ENCODE measurements at regions of chr22 and their contacts with region 1.

Region 1: DNA sequence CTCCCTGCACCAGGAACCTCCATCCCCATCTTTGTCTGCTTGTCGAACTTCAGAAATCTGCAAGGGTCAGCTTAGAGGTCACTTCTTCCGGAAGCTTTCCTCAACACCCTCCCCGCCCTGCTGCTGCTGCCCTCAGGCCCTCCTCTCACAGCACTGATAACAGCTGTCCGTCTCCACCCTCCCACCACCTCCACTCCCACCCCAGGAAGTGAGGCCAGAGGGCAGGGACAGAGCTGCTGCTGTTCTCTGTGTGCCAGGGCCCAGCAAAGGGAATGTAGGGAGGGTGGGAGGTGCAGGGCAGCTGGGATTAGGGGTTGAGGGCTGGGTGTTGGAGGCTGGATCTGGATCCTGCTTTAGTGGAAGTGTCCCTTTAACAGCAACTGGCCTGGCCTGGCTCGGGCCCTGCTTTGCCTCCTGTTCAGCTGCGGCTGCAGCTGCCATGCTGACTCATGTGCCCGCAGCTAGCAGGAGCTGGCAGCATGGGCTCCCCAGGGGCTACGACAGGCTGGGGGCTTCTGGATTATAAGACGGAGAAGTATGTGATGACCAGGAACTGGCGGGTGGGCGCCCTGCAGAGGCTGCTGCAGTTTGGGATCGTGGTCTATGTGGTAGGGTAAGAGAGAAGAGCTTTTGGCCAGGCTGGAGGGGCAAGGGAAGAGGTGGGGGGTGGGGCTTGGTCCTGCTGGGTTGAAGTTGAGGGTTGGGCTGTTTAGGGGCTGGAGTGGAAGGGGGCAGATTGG is at the start of gene P2RX6:
- DNase-seq: no peak
- H3K4me3 ChIP-seq: peak within 1 kb of the TSS in 1 of 3 donors; percentile 8
- H3K27ac ChIP-seq: peak within 1 kb of the TSS in 1 of 3 donors; percentile 3
- H3K4me1 ChIP-seq: peaks cover 8 to 17% of the 10 kb centered on the region in 2 donors
- H3K27me3 ChIP-seq: no peaks in the 10 kb centered on the region
- CTCF ChIP-seq: no peak
- POLR2A ChIP-seq: no peak
- total RNA-seq, gene P2RX6: 0.40 TPM in 1 of 4 donors, not detected in the others

Region 2: DNA sequence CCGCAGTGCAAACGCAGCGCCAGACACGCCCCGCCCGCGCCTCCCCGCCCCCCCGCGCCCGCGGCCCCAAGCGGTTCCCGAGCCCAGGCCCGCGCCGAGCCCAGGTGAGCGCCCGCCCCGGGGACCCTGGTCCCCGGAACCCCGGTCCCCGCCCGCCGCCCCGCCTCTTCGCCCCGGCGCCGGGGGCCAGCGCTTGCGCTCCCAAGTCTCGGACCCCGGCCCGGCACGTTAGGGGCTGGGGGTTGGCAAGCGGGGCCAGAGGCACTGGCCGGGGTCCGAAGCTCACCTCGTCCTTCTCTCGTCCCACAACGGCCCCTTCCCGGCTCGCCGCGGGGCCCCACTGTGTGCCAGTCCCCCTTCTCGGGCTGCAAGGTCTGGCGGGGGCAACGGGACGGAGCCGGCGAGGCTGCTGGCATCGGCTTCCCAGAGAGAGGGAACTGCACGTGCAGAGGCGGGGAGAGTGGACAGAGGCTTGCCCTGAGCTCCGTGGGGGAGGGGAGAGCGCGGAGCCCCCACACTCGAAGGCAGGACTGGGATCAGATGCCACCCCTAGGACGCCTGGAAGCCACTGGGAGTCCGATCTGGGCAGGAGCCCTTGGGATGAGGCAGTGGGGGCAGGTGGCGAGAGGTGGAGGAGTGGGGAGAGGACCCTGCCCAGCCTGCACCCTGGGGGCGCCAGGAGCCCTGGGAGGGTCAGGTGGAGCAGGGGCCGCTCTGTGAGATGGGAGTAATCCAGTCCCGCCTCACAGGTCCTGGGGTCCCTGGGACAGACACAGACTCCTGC is 49.6 kb before region 1 on chr22:
- intact Hi-C with region 1: loop called (anchors 5 kb)
- DNase-seq: peak; percentile 24 to 39
- H3K4me3 ChIP-seq: peak overlapping the region in 1 of 3 donors; percentile 32
- H3K27ac ChIP-seq: no peak overlapping the region
- H3K4me1 ChIP-seq: peaks cover 4 to 9% of the 10 kb centered on the region in 2 donors
- H3K27me3 ChIP-seq: no peaks in the 10 kb centered on the region
- CTCF ChIP-seq: no peak
- POLR2A ChIP-seq: no peak

Region 3: DNA sequence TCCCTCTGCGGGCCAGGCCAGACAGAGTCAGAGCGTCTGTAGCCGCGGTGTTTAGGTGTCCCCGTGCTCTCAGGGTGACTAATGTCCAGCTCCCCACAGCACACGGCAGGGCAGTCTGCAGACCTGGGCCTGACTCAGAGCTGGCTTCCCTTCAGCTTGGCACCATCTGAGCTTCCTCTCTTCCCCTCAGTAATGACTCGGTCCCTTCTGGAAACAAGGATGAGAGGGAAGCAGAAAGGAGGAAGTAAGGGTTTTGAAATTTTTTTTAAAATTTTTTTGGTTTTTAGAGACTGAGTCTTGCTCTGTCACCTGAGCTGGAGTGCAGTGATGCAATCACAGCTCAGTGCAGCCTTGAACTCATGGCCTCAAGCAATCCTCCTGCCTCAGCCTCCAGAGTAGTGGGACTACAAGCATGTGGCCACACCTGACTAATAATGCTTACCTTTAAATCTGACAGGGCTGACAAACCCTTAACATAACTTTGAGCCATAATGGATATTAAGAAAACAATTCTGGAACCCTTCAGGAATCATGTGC is 59.4 kb after region 1 on chr22:
- intact Hi-C with region 1: no loop called
- DNase-seq: no peak
- H3K4me3 ChIP-seq: no peak overlapping the region
- H3K27ac ChIP-seq: no peak overlapping the region
- H3K4me1 ChIP-seq: no peaks in the 10 kb centered on the region
- H3K27me3 ChIP-seq: no peaks in the 10 kb centered on the region
- CTCF ChIP-seq: no peak
- POLR2A ChIP-seq: no peak